Adrenal gland (tissue), 19 donors: ENCODE measurements at regions of chr11 and their contacts with region 1.

Region 1: GRCh38 chr11:64688534-64688982 is 34.4 kb downstream of the NRXN2 start:
- DNase-seq: peak; percentile 85 to 94 (median 90)
- H3K4me3 ChIP-seq: peak overlapping the region in 1 of 4 donors; percentile 44
- H3K27ac ChIP-seq: peak overlapping the region in 2 of 5 donors; percentile 31 to 56
- H3K4me1 ChIP-seq: peaks cover 0 to 18% of the 10 kb centered on the region in 2 donors
- H3K27me3 ChIP-seq: no peaks in the 10 kb centered on the region
- CTCF ChIP-seq: peak; percentile 78 to 98 (median 94)
- POLR2A ChIP-seq: no peak

Region 2: DNA sequence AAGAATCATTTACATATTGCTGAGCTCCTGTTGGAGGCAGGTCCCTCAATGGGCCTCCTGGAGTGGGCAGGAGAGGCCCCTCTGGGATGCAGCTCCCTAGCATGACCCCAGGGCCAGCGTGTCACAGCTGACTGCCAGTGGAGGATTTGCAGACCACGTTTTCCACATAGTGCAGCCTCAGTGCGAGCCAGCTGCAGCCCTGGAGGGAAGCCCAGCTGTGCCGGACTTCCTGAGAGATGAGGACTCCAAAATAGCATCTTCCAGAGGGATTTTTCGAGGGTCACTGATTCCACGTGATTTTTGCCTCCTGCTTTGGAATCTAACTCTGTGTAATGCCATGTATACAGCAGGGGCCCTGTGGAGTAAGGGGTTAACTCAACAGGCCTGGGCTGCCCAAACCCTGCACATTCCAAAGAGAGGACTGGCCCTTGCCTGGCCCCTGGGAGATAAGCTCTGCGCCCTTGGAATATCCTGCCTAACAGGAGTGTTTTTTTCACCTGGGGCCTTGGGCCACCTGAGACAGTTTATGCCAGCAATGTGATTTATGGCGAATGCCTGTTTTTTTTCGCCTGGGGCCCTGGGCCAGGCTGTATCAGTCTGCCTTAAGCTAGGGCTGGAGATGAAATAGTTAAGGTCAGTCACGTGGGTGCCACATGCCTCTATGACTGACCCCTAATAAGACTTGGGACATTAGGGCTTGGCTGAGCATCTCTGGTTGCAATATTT is 282.2 kb before region 1 on chr11:
- intact Hi-C with region 1: no loop called
- DNase-seq: peak in 4 of 7 donors; percentile 17 to 65 (median 34)
- H3K4me3 ChIP-seq: no peak overlapping the region
- H3K27ac ChIP-seq: peak overlapping the region in 2 of 5 donors; percentile 33 to 54
- H3K4me1 ChIP-seq: no peaks in the 10 kb centered on the region
- H3K27me3 ChIP-seq: no peaks in the 10 kb centered on the region
- CTCF ChIP-seq: no peak
- POLR2A ChIP-seq: no peak

Region 3: GRCh38 chr11:64723117-64723906 is 34.8 kb after region 1 on chr11 and contains the start of gene NRXN2:
- intact Hi-C with region 1: loop called in 1 of 2 experiments (anchors 5 kb)
- DNase-seq: peak; percentile 79 to 90 (median 85)
- H3K4me3 ChIP-seq: peak within 1 kb of the TSS in 2 of 4 donors; percentile 56 to 70
- H3K27ac ChIP-seq: peak within 1 kb of the TSS in 2 of 5 donors; percentile 26 to 43
- H3K4me1 ChIP-seq: peaks cover 3 to 6% of the 10 kb centered on the region in 2 donors
- H3K27me3 ChIP-seq: peaks cover under 1% of the 10 kb centered on the region
- CTCF ChIP-seq: peak; percentile 75 to 96 (median 90)
- POLR2A ChIP-seq: no peak
- total RNA-seq, gene NRXN2: 1.7 to 17.1 (median 4.4) TPM